ENCODE measurements at regions of chr19 and their contacts with region 1.

Region 1: GRCh38 chr19:34838753-34839431 is 65.9 kb upstream of the ZNF599 start:
- DNase-seq: peak; percentile 89
- ATAC-seq: peak; percentile 87
- H3K4me3 Mint-ChIP-seq: peak overlapping the region; percentile 75
- H3K27ac Mint-ChIP-seq: no peak overlapping the region
- H3K4me1 Mint-ChIP-seq: peaks cover 19% of the 10 kb centered on the region
- H3K27me3 Mint-ChIP-seq: peaks cover 21% of the 10 kb centered on the region
- CTCF ChIP-seq: peak; percentile 67

Region 2: GRCh38 chr19:34772697-34773554 is 66.0 kb before region 1 on chr19 and contains the start of gene ZNF599:
- CTCF ChIA-PET with region 1: interaction called, 15 read pairs
- POLR2A ChIA-PET with region 1: no interaction called
- DNase-seq: peak; percentile 92
- ATAC-seq: peak; percentile 98
- H3K4me3 Mint-ChIP-seq: peak within 1 kb of the TSS; percentile 90
- H3K27ac Mint-ChIP-seq: peak within 1 kb of the TSS; percentile 9; the same call in 1 of the 2 replicates
- H3K4me1 Mint-ChIP-seq: peaks cover 11% of the 10 kb centered on the region
- H3K27me3 Mint-ChIP-seq: peaks cover 22% of the 10 kb centered on the region
- CTCF ChIP-seq: no peak
- total RNA-seq, gene ZNF599: 4.0 to 5.2 TPM (median 5.2 TPM) in 3 replicates

Region 3: DNA sequence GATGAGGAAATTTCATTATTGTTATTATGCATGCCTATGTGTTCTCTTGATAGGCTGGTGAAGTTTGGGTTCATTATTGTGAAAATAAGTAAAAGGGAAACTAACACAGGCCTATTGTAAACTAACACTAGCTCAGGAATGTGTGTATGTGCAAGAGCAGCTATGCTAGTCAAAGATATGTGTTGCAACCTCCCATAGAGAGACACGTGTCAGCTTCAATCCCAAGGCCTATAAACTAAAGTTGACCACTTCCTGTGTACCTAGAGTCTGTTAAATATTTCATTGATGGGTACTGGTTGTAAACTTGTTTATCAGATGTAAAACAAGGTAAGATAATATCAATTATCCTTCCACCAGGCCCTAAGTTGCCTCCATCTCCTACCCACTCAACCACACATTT is 43.1 kb after region 1 on chr19:
- CTCF ChIA-PET with region 1: interaction called, 18 read pairs
- POLR2A ChIA-PET with region 1: no interaction called
- DNase-seq: no peak
- ATAC-seq: no peak
- H3K4me3 Mint-ChIP-seq: no peak overlapping the region
- H3K27ac Mint-ChIP-seq: no peak overlapping the region
- H3K4me1 Mint-ChIP-seq: no peaks in the 10 kb centered on the region
- H3K27me3 Mint-ChIP-seq: peaks cover 11% of the 10 kb centered on the region
- CTCF ChIP-seq: no peak

Region 4: DNA sequence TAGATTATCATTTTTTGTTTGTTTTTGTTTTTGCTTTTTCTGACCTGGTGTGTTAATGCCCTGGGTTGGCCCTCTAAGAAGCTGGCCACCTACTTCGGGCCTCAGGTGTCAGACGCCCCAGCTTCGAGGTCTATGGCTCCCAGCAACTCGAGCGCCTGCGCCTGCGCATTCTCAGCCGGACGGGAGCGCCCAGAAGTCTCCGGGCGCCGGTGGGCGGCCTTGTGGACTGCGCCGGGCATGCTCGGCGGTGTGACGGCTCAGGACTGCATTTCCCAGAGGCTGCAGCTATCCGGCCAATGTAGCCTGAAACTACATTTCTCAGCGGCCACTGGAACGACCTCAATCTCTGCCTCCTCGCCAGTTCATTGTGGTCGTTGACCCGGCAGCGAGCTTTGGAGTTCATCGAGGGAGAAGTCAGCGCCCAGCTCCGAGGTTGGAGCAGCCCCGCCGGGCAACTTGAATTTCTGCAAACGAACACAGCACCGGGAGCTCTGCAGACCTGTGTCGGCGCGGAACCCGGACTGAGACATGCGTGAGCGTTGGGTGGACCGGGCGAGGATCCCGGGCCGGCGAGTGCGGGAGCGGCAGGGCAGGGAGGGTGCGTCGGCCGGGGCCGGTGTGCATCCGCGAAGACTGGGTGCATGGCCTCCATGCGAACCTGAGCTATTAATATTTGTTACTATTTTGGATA is 87.9 kb after region 1 on chr19 and contains the start of gene ZNF30:
- CTCF ChIA-PET with region 1: interaction called, 33 read pairs
- POLR2A ChIA-PET with region 1: interaction called, 5 read pairs
- DNase-seq: peak; percentile 94
- ATAC-seq: peak; percentile 100
- H3K4me3 Mint-ChIP-seq: peak within 1 kb of the TSS; percentile 95
- H3K27ac Mint-ChIP-seq: peak within 1 kb of the TSS; percentile 83
- H3K4me1 Mint-ChIP-seq: peaks cover 11% of the 10 kb centered on the region
- H3K27me3 Mint-ChIP-seq: peaks cover 19% of the 10 kb centered on the region
- CTCF ChIP-seq: no peak
- total RNA-seq, gene ZNF30: 5.4 to 6.8 TPM (median 6.0 TPM) in 3 replicates

Region 5: DNA sequence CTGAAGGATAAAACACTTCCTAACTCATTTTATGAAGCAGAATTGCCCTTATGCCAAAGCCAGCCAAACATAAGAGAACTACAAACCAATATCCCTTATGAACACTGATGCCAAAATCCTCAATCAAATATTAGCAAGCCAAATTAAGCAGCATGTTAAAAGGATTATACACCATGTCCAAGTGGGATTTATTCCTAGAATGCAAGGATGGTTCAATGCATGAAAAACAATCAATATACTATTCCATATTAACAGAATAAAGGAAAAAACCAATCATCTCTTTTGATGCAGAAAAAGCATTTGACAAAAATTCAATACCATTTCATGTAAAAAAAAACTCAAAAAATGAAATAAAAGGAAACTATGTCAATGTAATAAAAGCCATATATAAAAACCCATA is 114.2 kb after region 1 on chr19:
- CTCF ChIA-PET with region 1: no interaction called
- POLR2A ChIA-PET with region 1: no interaction called
- DNase-seq: no peak
- ATAC-seq: no peak
- H3K4me3 Mint-ChIP-seq: no peak overlapping the region
- H3K27ac Mint-ChIP-seq: no peak overlapping the region
- H3K4me1 Mint-ChIP-seq: no peaks in the 10 kb centered on the region
- H3K27me3 Mint-ChIP-seq: peaks cover 11% of the 10 kb centered on the region
- CTCF ChIP-seq: no peak

Region 6: DNA sequence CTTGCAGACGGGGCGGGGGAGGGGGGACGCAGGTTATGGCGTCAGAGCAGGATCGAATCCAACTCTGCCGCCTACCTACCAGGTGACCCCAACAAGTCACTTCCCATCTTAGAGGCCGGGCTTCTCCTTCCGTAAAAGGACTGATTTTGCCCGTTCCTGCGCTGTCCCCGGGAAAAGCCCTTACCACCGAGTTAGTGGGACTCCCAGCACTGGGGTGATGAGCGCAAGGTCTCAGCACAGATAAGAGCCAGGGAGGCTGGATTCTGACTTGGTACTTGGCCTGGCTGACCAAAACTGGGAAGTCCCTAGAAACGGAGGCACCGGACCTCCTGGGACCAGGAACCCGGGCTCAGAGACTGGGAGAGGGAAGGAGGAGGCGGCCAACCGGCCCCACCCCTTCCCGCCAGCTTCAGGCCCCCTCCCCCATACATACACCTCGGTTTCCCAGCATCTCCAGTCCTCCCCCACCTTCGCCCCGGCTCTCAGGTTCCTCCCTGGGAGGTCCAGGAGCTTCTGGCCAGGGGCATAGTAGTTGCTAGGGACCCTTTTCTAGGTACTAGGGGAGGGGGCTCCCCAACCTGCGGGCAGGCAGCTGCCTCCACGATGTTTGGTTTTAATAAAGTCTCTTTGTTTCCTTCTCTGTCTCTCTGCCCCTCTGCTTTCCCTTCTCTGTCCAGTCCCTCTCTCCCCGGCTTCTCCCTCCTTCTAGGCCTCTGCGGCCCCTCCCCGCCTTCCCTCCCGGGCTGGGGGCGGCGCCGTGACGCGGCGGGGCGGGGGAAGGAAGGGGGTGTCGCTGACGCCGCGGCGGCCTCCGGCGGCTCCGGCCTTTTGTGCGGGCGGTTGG is 160.8 kb after region 1 on chr19 and contains the start of gene GRAMD1A:
- CTCF ChIA-PET with region 1: interaction called, 17 read pairs
- POLR2A ChIA-PET with region 1: interaction called, 5 read pairs
- DNase-seq: peak; percentile 82
- ATAC-seq: peak; percentile 46
- H3K4me3 Mint-ChIP-seq: peak within 1 kb of the TSS; percentile 100
- H3K27ac Mint-ChIP-seq: peak within 1 kb of the TSS; percentile 98
- H3K4me1 Mint-ChIP-seq: peaks cover 64% of the 10 kb centered on the region
- H3K27me3 Mint-ChIP-seq: no peaks in the 10 kb centered on the region
- CTCF ChIP-seq: no peak
- total RNA-seq, gene GRAMD1A: 235 to 389 TPM (median 236 TPM) in 3 replicates

Region 7: GRCh38 chr19:35055715-35056179 is 216.9 kb after region 1 on chr19:
- CTCF ChIA-PET with region 1: interaction called, 15 read pairs
- POLR2A ChIA-PET with region 1: no interaction called
- DNase-seq: peak; percentile 83
- ATAC-seq: peak; percentile 96
- H3K4me3 Mint-ChIP-seq: peak overlapping the region; percentile 18
- H3K27ac Mint-ChIP-seq: peak overlapping the region; percentile 43; the same call in 1 of the 2 replicates
- H3K4me1 Mint-ChIP-seq: peaks cover 19% of the 10 kb centered on the region
- H3K27me3 Mint-ChIP-seq: no peaks in the 10 kb centered on the region; the same call in 1 of the 2 replicates
- CTCF ChIP-seq: peak; percentile 36

Measured in WTC11 (cell line).